CD4-positive, alpha-beta memory T cell (primary cell): ENCODE measurements at regions of chr12 and their contacts with region 1.

Region 1: DNA sequence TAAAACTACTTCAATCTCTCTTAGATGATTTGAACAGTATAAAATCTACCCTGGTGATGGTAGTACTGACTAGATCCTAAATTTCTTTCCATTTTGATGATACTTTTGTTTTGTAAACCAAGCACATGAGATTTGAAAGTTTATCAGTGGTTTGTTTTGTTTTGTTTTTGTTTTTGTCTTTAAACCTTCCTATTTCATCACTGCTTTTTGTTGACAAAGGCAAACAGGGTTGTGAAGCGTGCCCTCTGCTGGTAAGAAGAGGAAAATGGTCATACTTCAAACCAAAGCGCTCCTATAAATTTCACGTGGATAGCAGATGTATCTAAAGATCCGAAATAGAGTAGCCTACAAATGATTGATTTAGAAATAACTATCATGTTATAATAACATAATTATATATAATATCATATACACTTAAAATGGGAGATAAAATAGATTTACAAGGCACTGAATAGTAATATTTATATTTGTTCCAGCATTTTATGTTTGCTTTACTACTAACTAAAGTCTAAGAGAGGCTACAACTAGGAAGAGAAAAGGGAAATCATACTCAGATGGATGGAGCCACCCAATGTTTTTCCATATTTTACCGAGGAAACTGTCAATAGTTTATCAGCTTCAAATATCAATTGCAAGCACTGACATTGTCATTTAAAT is 254.0 kb upstream of the USP15 start:
- DNase-seq: peak in 3 of 5 donors; percentile 3 to 18 (median 6)
- H3K4me3 ChIP-seq: no peak overlapping the region
- H3K4me3 Mint-ChIP-seq: no peak overlapping the region
- H3K27ac ChIP-seq: no peak overlapping the region
- H3K27ac Mint-ChIP-seq: no peak overlapping the region
- H3K4me1 ChIP-seq: no peaks in the 10 kb centered on the region
- H3K4me1 Mint-ChIP-seq: no peaks in the 10 kb centered on the region
- H3K27me3 ChIP-seq: no peaks in the 10 kb centered on the region
- H3K27me3 Mint-ChIP-seq: peaks cover 0 to 2% of the 10 kb centered on the region in 2 donors

Region 2: DNA sequence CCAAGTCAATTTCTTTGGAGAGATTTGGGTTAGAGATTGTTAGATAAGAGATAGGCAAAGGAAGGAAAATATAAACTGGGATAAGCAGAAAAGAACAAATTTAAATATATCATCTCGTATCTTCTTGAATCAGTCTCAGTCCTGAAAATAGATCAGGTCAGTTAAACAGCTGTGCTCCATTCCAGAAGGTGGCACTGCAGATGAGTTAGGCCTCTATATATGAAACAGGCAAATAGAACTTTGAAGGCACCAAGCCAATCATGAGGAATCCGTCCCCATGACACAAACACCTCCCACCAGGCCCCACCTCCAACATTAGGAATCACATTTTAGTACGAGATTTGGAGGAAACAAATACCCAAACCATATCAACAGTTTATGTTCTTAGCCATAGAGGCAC is 351.5 kb before region 1 on chr12:
- CTCF ChIA-PET with region 1: no interaction called
- POLR2A ChIA-PET with region 1: no interaction called
- intact Hi-C with region 1: loop called (anchors 10 kb)
- DNase-seq: no peak
- H3K4me3 ChIP-seq: no peak overlapping the region
- H3K4me3 Mint-ChIP-seq: no peak overlapping the region
- H3K27ac ChIP-seq: no peak overlapping the region
- H3K27ac Mint-ChIP-seq: no peak overlapping the region
- H3K4me1 ChIP-seq: no peaks in the 10 kb centered on the region
- H3K4me1 Mint-ChIP-seq: no peaks in the 10 kb centered on the region
- H3K27me3 ChIP-seq: no peaks in the 10 kb centered on the region
- H3K27me3 Mint-ChIP-seq: no peaks in the 10 kb centered on the region